HepG2 (cell line): ENCODE measurements at regions of chr11 and their contacts with region 1.

Region 1: DNA sequence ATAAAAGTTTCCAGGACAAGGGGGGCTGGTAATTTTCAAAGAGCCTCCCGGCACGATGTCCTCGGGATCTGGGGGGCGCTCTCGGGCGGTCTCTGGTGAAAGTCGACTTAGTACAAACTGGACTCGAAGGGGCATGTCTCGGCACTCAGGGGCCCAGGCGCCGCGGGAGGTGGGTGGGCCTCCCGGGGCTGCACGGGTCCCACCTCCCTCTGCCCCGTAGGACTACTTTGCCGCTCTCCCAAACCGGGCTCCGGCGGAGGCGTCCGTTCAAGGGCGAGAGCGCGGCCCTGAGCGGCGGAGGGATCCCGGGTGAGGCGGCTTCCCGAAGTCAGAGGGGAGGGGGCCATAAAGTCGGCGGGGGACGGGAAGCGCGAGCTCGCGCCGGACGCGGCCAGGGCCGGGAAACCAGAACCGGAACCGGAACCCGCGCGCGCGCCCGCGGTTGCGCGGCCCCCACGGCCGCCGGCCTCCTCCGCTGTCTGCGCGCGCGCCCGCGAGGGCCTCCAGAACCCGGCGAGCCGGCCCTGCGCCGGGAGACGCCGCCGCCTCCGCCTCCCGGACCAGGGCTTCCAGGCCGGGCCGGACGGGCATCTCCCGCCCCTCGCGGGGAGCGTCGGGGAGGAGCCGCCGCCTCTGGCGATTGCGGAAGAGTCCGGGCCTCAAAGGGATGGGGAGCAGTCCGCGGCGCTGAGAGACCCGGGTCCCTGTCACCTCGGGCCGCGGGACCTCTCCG is at the start of gene ARHGEF12:
- DNase-seq: peak; percentile 88
- ATAC-seq: peak; percentile 73
- H3K4me3 ChIP-seq: peak within 1 kb of the TSS; percentile 80 to 96 (median 86)
- H3K27ac ChIP-seq: peak within 1 kb of the TSS; percentile 86
- H3K4me1 ChIP-seq: peaks cover 31% of the 10 kb centered on the region
- H3K27me3 ChIP-seq: no peaks in the 10 kb centered on the region; a peak in 1 of 5 replicates
- CTCF ChIP-seq: peak; percentile 75
- EP300 ChIP-seq: peak; percentile 52 to 64; a peak in 2 of 4 replicates
- POLR2A ChIP-seq: peak in 1 of 2 experiments; percentile 50; a peak in 3 of 4 replicates
- RAD21 ChIP-seq: peak; percentile 59
- total RNA-seq, gene ARHGEF12: 54.4 and 72.2 TPM in 2 replicates

Region 2: GRCh38 chr11:120372296-120372695 is 36.2 kb after region 1 on chr11:
- CTCF ChIA-PET with region 1: no interaction called
- POLR2A ChIA-PET with region 1: no interaction called
- in situ Hi-C with region 1: no loop called
- intact Hi-C with region 1: loop called (anchors 5 kb)
- DNase-seq: peak; percentile 64
- ATAC-seq: peak; percentile 97
- H3K4me3 ChIP-seq: peak overlapping the region in 1 of 3 experiments; percentile 14; a peak in 1 of 6 replicates
- H3K27ac ChIP-seq: peak overlapping the region; percentile 70
- H3K4me1 ChIP-seq: peaks cover 52% of the 10 kb centered on the region
- H3K27me3 ChIP-seq: no peaks in the 10 kb centered on the region; a peak in 1 of 5 replicates
- CTCF ChIP-seq: no peak
- EP300 ChIP-seq: no peak
- POLR2A ChIP-seq: no peak
- RAD21 ChIP-seq: no peak

Region 3: DNA sequence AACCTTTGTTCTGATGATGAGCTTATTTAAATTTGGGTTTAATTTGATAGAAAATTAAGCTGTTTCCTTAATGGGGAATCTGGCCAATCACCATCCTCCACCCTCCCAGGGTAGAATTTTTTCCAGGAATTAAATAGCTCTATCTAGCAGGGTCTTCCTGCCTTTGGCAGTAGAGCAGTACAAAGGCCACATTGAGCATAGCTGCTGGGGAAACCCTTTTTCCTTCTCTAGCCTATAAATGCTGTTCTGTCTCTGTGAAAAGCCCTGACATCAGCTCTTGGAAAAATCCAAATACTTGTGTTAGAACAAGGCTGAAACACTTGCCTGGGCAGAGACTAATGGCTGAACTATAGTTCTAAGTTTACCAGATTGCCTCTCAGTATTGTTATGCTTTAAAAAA is 55.2 kb after region 1 on chr11:
- CTCF ChIA-PET with region 1: no interaction called
- POLR2A ChIA-PET with region 1: interaction called, 11 read pairs
- in situ Hi-C with region 1: loop called (anchors 5 kb)
- intact Hi-C with region 1: no loop called
- DNase-seq: peak; percentile 92
- ATAC-seq: peak; percentile 99
- H3K4me3 ChIP-seq: peak overlapping the region in 2 of 3 experiments; percentile 38 to 39; a peak in 2 of 6 replicates
- H3K27ac ChIP-seq: peak overlapping the region; percentile 82
- H3K4me1 ChIP-seq: peaks cover 72% of the 10 kb centered on the region
- H3K27me3 ChIP-seq: no peaks in the 10 kb centered on the region
- CTCF ChIP-seq: no peak
- EP300 ChIP-seq: no peak
- POLR2A ChIP-seq: no peak
- RAD21 ChIP-seq: no peak

Region 4: DNA sequence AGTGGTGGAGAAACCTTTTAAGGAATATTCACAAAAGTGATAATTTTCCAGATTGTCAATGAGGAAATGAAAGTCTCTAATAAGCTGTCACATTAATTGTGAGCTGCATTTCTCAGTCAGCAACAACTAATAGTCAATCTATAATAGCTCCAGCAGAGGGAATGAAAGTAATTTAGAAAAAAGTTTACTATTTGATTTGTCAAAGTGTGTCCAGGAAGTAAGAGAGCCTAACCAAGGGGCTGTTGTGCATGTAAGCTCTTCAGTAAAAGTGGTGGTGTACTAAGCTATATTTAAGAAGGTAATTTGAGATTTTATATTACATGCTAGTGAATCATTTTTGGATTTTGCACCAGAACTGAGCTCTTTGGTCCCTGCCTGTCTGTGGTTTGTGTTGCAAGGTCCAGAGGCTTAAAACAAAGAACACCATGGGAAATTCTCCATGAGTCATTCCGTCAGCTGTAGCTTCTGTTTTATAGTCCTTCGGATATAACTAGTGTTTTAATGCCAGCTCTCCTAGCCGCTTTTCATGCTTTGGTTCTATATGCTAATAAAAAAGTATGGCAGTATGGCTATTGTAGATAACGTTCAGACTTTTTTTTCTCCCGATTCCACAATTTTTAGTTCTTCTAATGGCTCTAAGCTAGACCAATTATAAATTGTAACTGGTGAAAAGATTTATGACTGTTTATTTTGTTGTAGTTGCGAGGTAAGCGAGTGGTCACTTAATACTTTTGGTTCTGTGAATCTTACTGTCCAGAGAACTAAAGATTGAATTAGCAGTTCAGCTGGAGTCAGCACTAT is 64.7 kb after region 1 on chr11:
- CTCF ChIA-PET with region 1: no interaction called
- POLR2A ChIA-PET with region 1: interaction called, 7 read pairs
- in situ Hi-C with region 1: no loop called
- intact Hi-C with region 1: loop called (anchors 2 kb)
- DNase-seq: peak; percentile 93
- ATAC-seq: peak; percentile 98
- H3K4me3 ChIP-seq: peak overlapping the region; percentile 37 to 57 (median 51); a peak in 5 of 6 replicates
- H3K27ac ChIP-seq: peak overlapping the region; percentile 78
- H3K4me1 ChIP-seq: peaks cover 68% of the 10 kb centered on the region
- H3K27me3 ChIP-seq: no peaks in the 10 kb centered on the region
- CTCF ChIP-seq: no peak
- EP300 ChIP-seq: peak in 1 of 2 experiments; percentile 70; a peak in 2 of 4 replicates
- POLR2A ChIP-seq: no peak
- RAD21 ChIP-seq: no peak

Region 5: GRCh38 chr11:120432056-120433018 is 96.3 kb after region 1 on chr11:
- CTCF ChIA-PET with region 1: interaction called, 4 read pairs
- POLR2A ChIA-PET with region 1: no interaction called
- in situ Hi-C with region 1: no loop called
- intact Hi-C with region 1: loop called (anchors 5 kb)
- DNase-seq: peak; percentile 51
- ATAC-seq: no peak
- H3K4me3 ChIP-seq: no peak overlapping the region
- H3K27ac ChIP-seq: no peak overlapping the region
- H3K4me1 ChIP-seq: no peaks in the 10 kb centered on the region
- H3K27me3 ChIP-seq: no peaks in the 10 kb centered on the region
- CTCF ChIP-seq: no peak
- EP300 ChIP-seq: no peak
- POLR2A ChIP-seq: no peak
- RAD21 ChIP-seq: no peak